Activated T-helper 2 cell treated with anti-CD3 and anti-CD28 coated beads, Interferon-gamma antibody, Interleukin-2, Interleukin-4, amounts not matched to agents 10 μg/mL and 5 μg/mL and 100 μg/mL, durations not matched to agents 14 hours and 24 hours and 36 hours (primary cell): ENCODE measurements at regions of chr16 and their contacts with region 1.

Region 1: DNA sequence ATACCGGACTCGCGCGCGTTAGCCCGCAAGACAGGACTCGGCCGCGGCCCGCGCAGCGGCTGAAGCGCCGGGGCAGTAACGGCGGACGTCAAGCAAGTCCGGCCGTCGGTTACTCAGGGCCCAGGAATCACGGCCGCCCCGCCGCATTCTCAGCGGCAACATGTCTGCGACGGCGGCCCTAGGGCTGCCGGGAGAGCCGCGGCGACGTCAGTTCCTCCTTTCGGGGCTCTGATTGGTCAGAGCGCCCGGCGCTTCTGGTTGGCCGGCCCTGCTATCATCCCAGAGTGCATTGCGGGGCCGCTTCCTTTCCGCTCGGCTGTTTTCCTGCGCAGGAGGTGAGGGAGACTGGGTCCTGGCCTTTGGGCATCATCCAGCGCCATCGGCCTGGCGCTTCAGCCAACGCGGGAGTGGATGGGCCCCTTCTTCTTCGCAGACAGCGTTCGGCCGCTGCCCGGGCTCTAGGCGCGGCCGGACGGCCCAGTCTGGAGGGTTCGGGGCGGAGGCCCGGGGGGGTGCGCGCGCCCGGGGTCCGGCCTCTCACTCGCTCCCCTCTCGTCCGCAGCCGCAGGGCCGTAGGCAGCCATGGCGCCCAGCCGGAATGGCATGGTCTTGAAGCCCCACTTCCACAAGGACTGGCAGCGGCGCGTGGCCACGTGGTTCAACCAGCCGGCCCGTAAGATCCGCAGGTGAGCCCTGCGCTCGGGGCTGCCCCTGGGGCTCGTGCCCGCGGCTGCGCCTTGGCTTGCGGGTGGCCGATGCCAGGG is at the start of gene RPL13:
- DNase-seq: peak; percentile 92
- H3K4me3 Mint-ChIP-seq: peak within 1 kb of the TSS; percentile 99
- H3K27ac Mint-ChIP-seq: peak within 1 kb of the TSS; percentile 98
- H3K4me1 Mint-ChIP-seq: peaks cover 39% of the 10 kb centered on the region
- H3K27me3 Mint-ChIP-seq: no peaks in the 10 kb centered on the region
- total RNA-seq, gene RPL13: 2,404 and 2,406 TPM in 2 replicates

Region 2: GRCh38 chr16:89241187-89242007 is 319.2 kb before region 1 on chr16:
- intact Hi-C with region 1: loop called (anchors 5 kb)
- DNase-seq: peak; percentile 78
- H3K4me3 Mint-ChIP-seq: peak overlapping the region; percentile 97
- H3K27ac Mint-ChIP-seq: peak overlapping the region; percentile 98
- H3K4me1 Mint-ChIP-seq: peaks cover 10% of the 10 kb centered on the region
- H3K27me3 Mint-ChIP-seq: no peaks in the 10 kb centered on the region

Region 3: DNA sequence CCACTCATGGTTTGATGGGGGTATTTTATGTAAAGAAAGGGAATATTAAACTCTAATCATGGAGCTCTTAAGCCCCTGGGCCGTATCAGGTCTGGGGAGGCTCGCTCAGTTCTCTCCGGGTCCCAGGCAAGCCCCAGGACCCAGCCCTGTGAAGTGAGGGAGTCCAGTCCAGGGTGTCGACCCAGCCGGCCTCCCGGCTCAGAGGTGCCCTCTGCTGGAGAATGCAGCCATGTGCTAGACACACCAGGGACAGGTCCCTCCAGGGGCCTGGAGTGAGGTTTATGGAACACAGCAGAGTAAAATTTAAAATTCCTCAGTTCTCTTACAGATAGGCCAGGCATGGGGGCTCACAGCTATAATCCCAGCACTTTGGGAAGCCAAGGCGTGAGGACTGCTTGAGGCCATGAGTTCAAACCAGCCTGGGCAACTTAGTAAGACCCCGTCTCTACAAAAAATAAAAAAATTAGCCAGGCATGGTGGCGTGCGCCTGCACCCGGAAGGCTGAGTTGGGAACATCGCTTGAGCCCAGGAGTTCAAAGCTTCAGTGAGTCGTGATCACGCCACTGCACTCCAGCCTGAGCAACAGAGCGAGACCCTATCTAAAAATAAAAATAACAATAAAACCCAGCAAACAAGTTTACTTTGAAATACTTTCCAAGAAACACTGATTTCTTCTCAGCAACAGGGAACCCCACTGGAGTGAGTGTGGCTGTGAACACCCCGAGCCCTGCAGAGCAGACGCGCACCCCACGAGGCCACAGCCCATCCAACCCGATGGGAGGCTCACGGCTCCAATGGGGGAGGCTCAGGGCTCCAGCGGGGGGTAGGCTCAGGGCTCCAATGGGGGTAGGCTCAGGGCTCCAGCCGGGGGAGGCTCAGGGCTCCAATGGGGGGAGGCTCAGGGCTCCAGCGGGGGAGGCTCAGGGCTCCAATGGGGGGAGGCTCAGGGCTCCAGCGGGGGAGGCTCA is 270.8 kb before region 1 on chr16:
- intact Hi-C with region 1: no loop called
- DNase-seq: peak; percentile 55
- H3K4me3 Mint-ChIP-seq: no peak overlapping the region
- H3K27ac Mint-ChIP-seq: peak overlapping the region; percentile 46
- H3K4me1 Mint-ChIP-seq: no peaks in the 10 kb centered on the region
- H3K27me3 Mint-ChIP-seq: no peaks in the 10 kb centered on the region

Region 4: DNA sequence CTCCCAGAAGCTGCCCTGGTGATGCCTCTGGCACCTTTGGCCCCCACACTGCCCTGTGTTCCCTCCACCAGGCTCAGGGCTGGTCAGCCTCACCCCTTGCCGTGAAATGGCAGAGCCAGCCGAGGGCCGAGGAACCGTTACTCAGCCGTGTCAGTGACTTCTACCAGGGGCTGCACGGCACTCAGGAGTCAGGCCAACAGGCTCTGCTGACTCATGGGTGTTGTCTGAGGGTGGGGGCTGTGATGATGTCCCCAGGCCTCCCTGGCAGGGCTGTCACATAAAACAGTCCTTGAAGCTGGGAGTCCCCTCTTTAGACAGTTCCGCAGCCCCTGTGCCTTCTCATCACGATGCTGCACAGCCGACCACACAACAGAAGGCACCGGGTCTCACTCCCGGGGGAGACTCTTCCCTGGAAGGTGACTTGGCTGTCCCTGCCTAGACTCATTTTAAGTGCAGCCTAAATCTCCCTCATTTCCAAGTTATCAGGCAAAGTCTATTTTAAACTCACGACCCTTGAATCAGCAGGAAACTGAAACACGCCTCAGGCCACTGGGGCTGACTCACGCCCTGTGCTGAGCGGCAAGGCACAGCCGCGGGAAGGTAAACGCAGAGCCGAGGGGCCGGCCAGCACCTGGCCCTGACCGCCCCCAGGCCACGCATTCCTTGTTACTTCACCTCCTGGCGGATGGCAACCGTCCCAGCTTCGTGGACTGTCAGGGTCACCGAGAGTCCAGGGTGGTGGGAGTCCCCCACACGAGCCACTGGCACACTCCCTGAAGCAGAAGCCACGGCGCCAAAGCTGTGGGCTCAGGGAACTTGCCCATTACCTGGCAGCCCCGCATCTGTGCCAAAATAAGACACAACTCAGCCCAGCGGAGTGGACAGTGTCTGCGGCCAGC is 240.4 kb before region 1 on chr16:
- intact Hi-C with region 1: loop called (anchors 10 kb)
- DNase-seq: no peak
- H3K4me3 Mint-ChIP-seq: no peak overlapping the region
- H3K27ac Mint-ChIP-seq: peak overlapping the region; percentile 48
- H3K4me1 Mint-ChIP-seq: peaks cover 79% of the 10 kb centered on the region
- H3K27me3 Mint-ChIP-seq: no peaks in the 10 kb centered on the region

Region 5: GRCh38 chr16:89641458-89642119 is 81.0 kb after region 1 on chr16:
- intact Hi-C with region 1: loop called (anchors 1 kb)
- DNase-seq: no peak
- H3K4me3 Mint-ChIP-seq: no peak overlapping the region
- H3K27ac Mint-ChIP-seq: no peak overlapping the region
- H3K4me1 Mint-ChIP-seq: peaks cover 7% of the 10 kb centered on the region
- H3K27me3 Mint-ChIP-seq: no peaks in the 10 kb centered on the region

Region 6: DNA sequence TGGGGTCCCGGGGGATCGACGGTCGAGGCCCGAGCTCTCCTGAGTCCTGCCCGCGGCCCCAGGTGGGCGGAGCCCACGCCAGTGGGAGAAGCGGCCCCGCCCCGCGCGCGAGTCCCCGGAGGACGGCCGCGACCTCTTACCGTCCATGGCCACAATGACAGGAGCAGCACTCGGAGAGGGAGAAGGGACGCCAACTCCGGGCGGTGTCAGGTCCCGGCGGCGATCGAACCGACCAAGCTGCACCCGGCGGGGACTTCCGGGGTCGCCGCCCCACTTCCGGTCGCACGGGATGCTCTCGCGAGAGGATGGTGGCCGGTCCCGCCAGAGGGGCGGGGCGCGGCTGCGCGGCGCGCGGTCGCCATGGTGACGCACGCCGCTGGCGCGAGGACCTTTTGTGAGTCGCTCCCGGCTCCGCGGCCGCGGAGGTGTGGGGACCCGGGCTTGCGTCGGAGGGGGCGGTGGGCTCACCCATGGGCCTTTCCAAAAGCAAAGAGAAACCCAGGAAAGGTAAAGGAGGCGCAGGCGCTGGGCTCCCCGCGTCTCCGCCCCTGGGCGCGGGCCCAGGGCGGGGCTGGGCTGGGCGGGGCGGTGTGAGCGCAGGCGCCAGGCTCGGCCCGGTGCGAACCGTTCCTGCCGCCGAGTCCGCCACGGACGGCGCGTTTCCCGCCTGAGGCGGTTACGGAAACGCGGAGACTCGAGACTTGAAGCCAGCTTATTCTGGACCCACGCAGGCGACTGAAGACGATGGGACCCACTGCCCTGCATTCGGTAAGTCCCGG is 97.1 kb after region 1 on chr16 and contains the starts of genes CHMP1A and SPATA33:
- intact Hi-C with region 1: loop called (anchors 5 kb)
- DNase-seq: peak; percentile 89
- H3K4me3 Mint-ChIP-seq: peak within 1 kb of the TSS; percentile 92
- H3K27ac Mint-ChIP-seq: peak within 1 kb of the TSS; percentile 89
- H3K4me1 Mint-ChIP-seq: peaks cover 15% of the 10 kb centered on the region
- H3K27me3 Mint-ChIP-seq: no peaks in the 10 kb centered on the region
- total RNA-seq, gene CHMP1A: 80.0 and 89.0 TPM in 2 replicates
- total RNA-seq, gene SPATA33: 15.5 and 16.6 TPM in 2 replicates